OCI-LY7 (cell line): ENCODE measurements at regions of chr4 and their contacts with region 1.

Region 1: GRCh38 chr4:77075869-77076799 is at the start of gene CCNI:
- DNase-seq: peak; percentile 99
- H3K4me3 ChIP-seq: peak within 1 kb of the TSS; percentile 95
- H3K27ac ChIP-seq: peak within 1 kb of the TSS; percentile 84
- H3K4me1 ChIP-seq: peaks cover 64% of the 10 kb centered on the region
- CTCF ChIP-seq: no peak
- total RNA-seq, gene CCNI: 105 and 116 TPM in 2 replicates

Region 2: DNA sequence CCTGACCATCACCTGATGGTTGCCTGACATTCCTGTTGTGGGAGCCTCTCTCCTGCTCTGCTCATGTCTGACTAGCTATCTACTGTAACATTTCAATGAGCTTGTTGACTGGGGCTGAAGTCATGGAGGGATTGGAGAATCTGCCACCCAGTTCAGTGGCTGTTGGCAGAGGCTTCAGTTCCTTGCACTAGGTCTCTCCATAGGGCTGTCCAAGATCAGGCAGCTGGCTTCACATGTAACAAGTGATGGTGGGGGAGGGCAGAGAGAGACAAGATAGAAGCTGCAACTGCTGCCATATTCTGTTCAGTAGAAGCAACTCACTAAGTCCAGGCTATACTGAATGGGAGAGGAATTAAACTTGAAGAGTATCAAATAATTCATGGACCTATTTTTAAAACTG is 13.7 kb after region 1 on chr4:
- CTCF ChIA-PET with region 1: no interaction called
- POLR2A ChIA-PET with region 1: interaction called, 26 read pairs
- intact Hi-C with region 1: no loop called
- DNase-seq: no peak
- H3K4me3 ChIP-seq: no peak overlapping the region
- H3K27ac ChIP-seq: no peak overlapping the region
- H3K4me1 ChIP-seq: peaks cover 14% of the 10 kb centered on the region
- CTCF ChIP-seq: no peak